T-cell (primary cell): ENCODE measurements at regions of chr7 and their contacts with region 1.

Region 1: DNA sequence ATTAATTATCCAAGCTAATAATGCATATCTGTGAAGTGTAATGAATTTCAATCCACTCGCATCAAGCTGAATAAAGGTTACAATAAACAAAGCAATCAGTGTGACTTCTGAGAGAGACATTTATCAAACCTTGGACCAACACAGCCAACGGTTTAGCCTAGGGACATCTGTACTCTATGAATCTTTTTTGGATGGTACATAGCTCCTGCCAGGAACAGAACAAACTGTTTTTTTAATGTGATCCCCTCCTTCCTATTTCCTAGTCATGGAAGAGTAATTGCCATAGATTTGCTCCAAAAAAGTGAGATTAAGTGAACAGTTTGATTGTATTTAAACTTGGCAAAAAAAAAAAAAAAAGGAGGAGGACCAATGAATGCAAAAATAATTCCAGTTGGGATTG is 11.2 kb upstream of the NRCAM start:
- DNase-seq: no peak
- ATAC-seq: no peak
- H3K4me3 ChIP-seq: no peak overlapping the region
- H3K4me3 Mint-ChIP-seq: no peak overlapping the region
- H3K27ac ChIP-seq: no peak overlapping the region
- H3K27ac Mint-ChIP-seq: no peak overlapping the region
- H3K4me1 ChIP-seq: peaks cover 6 to 23% of the 10 kb centered on the region in 2 experiments
- H3K4me1 Mint-ChIP-seq: peaks cover 16 to 35% (median 34%) of the 10 kb centered on the region in 3 donors
- H3K27me3 ChIP-seq: no peaks in the 10 kb centered on the region
- H3K27me3 Mint-ChIP-seq: peaks cover 0 to 3% of the 10 kb centered on the region in 2 donors

Region 2: GRCh38 chr7:107638594-107638993 is 828.8 kb before region 1 on chr7:
- CTCF ChIA-PET with region 1: no interaction called
- POLR2A ChIA-PET with region 1: interaction called in 1 of 2 experiments, 10 read pairs
- DNase-seq: no peak
- ATAC-seq: no peak
- H3K4me3 ChIP-seq: no peak overlapping the region
- H3K4me3 Mint-ChIP-seq: no peak overlapping the region
- H3K27ac ChIP-seq: no peak overlapping the region
- H3K27ac Mint-ChIP-seq: no peak overlapping the region
- H3K4me1 ChIP-seq: no peaks in the 10 kb centered on the region
- H3K4me1 Mint-ChIP-seq: peaks cover 0 to 6% (median 5%) of the 10 kb centered on the region in 3 donors
- H3K27me3 ChIP-seq: no peaks in the 10 kb centered on the region
- H3K27me3 Mint-ChIP-seq: peaks cover 7% of the 10 kb centered on the region in 2 donors

Region 3: DNA sequence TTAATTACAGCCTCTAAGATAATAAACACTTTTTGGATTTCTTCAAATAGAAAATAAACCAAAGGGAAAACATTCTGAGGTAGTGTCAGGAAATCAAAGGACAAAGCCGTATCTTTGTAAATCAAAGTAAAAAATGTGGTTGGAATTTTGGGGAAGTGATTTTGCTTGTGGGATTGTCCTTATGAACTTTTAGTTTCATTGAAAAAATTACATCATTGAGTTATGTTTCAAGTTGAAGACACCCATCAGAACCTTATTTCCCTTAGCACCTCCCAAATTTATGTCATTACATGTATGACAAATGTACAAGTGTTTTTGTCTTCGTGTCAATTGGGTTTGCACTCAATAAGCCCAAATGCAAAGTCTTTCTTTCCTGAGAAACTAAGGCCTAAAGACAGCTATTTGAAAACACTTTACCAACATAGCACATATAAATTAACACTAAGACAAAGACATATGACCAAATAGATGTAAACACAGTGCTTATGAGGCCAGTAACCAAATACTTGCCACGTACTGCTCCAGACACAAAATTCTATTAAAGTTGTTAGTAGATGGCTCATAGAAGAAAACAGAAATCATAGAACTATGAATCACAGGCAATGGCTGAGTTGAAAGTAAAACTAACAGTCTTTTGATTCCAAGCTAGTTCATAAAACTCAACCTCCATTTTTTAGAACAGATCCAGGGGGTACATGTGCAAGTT is 310.3 kb before region 1 on chr7:
- CTCF ChIA-PET with region 1: no interaction called
- POLR2A ChIA-PET with region 1: no interaction called
- DNase-seq: no peak
- ATAC-seq: no peak
- H3K4me3 ChIP-seq: no peak overlapping the region
- H3K4me3 Mint-ChIP-seq: no peak overlapping the region
- H3K27ac ChIP-seq: no peak overlapping the region
- H3K27ac Mint-ChIP-seq: no peak overlapping the region
- H3K4me1 ChIP-seq: no peaks in the 10 kb centered on the region
- H3K4me1 Mint-ChIP-seq: no peaks in the 10 kb centered on the region
- H3K27me3 ChIP-seq: no peaks in the 10 kb centered on the region
- H3K27me3 Mint-ChIP-seq: peaks cover 21% of the 10 kb centered on the region in 2 donors

Region 4: GRCh38 chr7:108442039-108442568 is 25.3 kb before region 1 on chr7:
- CTCF ChIA-PET with region 1: no interaction called
- POLR2A ChIA-PET with region 1: no interaction called
- DNase-seq: no peak
- ATAC-seq: peak in 2 of 4 experiments; percentile 32 to 36
- H3K4me3 ChIP-seq: no peak overlapping the region
- H3K4me3 Mint-ChIP-seq: no peak overlapping the region
- H3K27ac ChIP-seq: no peak overlapping the region
- H3K27ac Mint-ChIP-seq: no peak overlapping the region
- H3K4me1 ChIP-seq: no peaks in the 10 kb centered on the region
- H3K4me1 Mint-ChIP-seq: no peaks in the 10 kb centered on the region
- H3K27me3 ChIP-seq: no peaks in the 10 kb centered on the region
- H3K27me3 Mint-ChIP-seq: peaks cover 3 to 4% of the 10 kb centered on the region in 2 donors